ENCODE measurements at regions of chr3 and their contacts with region 1.

Region 1: GRCh38 chr3:155701882-155702465 is 42.9 kb downstream of the PLCH1 start:
- DNase-seq: no peak
- ATAC-seq: peak; percentile 88

Region 2: DNA sequence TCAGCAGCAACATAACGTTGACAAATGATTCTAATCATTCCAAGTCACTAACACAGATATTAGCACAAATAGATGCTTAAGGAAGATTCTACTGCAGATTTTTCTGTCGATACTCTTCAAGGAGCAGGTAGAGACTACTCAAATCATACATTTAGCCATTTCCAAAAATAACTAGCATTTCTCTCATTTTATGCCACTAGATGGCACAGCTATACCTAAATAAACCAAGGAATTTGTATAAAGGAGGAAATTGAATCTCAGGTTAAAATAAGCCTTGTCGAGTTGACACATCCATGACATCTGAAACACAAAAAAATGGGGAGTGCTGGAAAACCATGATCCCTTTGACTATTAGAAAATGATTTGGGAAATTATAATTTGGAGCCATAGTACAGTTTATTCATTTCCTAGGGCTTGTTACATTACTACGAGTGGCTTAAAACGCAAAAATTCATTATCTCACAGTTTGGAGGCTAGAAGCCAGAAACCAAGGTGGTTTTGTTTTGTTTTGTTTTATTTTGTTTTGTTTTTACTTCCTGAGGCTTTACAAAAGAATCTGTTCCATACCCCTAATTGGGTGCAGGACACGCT is 349.0 kb before region 1 on chr3:
- intact Hi-C with region 1: loop called (anchors 2 kb)
- DNase-seq: no peak
- ATAC-seq: peak; percentile 78

Region 3: GRCh38 chr3:155382396-155383042 is 319.5 kb before region 1 on chr3:
- intact Hi-C with region 1: loop called (anchors 10 kb)
- DNase-seq: peak; percentile 88
- ATAC-seq: peak; percentile 90

Region 4: GRCh38 chr3:155594526-155595187 is 107.3 kb before region 1 on chr3:
- intact Hi-C with region 1: no loop called
- DNase-seq: no peak
- ATAC-seq: no peak

Measured in Right ventricle myocardium superior (tissue), 1 donor.